ENCODE measurements at regions of chr17 and their contacts with region 1.

Region 1: DNA sequence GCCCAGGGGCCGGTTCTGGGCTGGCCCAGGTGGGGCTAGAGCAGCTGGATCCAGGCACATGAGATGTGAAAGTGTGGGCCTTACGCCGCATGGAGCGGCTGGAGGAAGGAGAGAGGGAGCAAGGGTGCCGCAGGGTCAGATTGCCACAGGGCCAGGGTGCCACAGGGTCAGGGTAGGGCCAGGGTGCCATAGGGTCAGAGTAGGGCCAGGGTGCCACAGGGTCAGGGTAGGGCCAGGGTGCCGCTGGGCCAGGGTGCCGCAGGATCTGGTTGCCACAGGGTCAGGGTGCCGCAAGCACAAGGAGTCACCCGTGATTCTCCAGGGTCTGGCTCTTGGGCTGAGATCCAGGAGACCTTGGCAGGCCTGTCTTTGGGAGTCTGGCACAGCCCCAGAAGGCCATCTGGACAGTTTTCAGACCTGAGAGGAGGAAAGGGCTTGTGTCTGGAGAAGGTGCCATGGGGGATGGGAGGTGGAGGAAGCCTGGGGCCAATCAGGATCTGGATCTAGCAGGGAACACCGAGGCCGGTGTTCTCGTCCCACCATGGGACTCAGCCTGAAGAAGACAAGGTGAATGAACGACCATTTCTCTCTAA is 13.1 kb upstream of the LASP1NB start:
- DNase-seq: peak; percentile 26
- ATAC-seq: no peak
- H3K4me3 Mint-ChIP-seq: no peak overlapping the region
- H3K27ac Mint-ChIP-seq: peak overlapping the region; percentile 54
- H3K4me1 Mint-ChIP-seq: peaks cover 12% of the 10 kb centered on the region
- H3K27me3 Mint-ChIP-seq: no peaks in the 10 kb centered on the region

Region 2: GRCh38 chr17:38922538-38923297 is 10.4 kb after region 1 on chr17:
- POLR2A ChIA-PET with region 1: interaction called, 10 read pairs
- DNase-seq: no peak
- ATAC-seq: no peak
- H3K4me3 Mint-ChIP-seq: no peak overlapping the region
- H3K27ac Mint-ChIP-seq: peak overlapping the region; percentile 58
- H3K4me1 Mint-ChIP-seq: peaks cover 38% of the 10 kb centered on the region
- H3K27me3 Mint-ChIP-seq: no peaks in the 10 kb centered on the region